ENCODE measurements at regions of chr7 and their contacts with region 1.

Region 1: GRCh38 chr7:92447345-92448204 is at the start of gene GATAD1:
- DNase-seq: peak; percentile 95
- H3K4me3 Mint-ChIP-seq: peak within 1 kb of the TSS; percentile 94
- H3K27ac Mint-ChIP-seq: peak within 1 kb of the TSS; percentile 93
- H3K4me1 Mint-ChIP-seq: peaks cover 9% of the 10 kb centered on the region
- H3K27me3 Mint-ChIP-seq: peaks cover 2% of the 10 kb centered on the region
- total RNA-seq, gene GATAD1: 21.4 and 22.1 TPM in 2 replicates

Region 2: GRCh38 chr7:91089382-91089963 is 1358.1 kb before region 1 on chr7:
- intact Hi-C with region 1: loop called (anchors 10 kb)
- DNase-seq: peak; percentile 71
- H3K4me3 Mint-ChIP-seq: no peak overlapping the region
- H3K27ac Mint-ChIP-seq: no peak overlapping the region
- H3K4me1 Mint-ChIP-seq: peaks cover 12% of the 10 kb centered on the region
- H3K27me3 Mint-ChIP-seq: peaks cover 7% of the 10 kb centered on the region

Region 3: DNA sequence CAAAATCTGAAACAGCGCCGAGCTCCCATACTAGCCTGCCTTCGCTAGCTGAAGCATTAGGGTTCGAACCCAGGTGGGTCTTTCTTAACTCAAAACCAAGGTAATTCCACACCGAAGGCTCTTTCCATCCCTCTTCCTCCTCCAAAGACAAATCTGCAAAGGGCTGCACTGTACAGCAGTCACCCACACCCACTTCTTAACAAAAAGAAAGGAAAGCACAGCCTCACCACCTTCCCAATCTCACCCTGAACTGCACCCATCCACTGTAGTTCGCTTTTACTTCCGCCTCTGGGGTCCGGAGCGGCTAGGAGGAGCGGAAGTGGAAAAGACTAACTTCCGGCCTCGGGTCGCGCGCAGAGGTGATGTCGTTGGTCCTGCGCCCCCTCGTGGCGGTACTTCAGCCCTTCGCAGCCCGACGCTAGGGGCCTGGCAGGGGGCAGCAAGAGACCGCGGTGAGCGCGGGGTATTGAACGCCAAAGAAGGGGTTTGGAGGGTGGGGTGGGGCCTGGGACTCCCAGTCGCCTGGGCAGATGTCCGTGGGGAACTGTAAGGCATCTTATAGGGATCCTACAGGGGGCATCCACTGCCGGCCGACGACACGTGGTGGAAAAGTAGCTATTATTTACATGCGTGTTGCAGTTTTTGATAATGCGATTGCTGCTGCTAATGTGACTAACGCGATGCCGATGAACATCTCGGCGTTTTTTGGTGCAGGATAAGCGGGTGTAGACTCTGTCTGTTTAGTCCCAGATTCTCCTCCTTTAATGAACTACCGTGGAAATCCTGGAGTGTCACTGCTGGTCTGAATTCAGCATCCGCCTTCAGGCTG is 566.9 kb before region 1 on chr7 and contains the start of gene MTERF1:
- intact Hi-C with region 1: loop called (anchors 2 kb)
- DNase-seq: peak; percentile 97
- H3K4me3 Mint-ChIP-seq: peak within 1 kb of the TSS; percentile 90
- H3K27ac Mint-ChIP-seq: peak within 1 kb of the TSS; percentile 90
- H3K4me1 Mint-ChIP-seq: peaks cover 27% of the 10 kb centered on the region
- H3K27me3 Mint-ChIP-seq: no peaks in the 10 kb centered on the region
- total RNA-seq, gene MTERF1: 19.5 and 20.9 TPM in 2 replicates

Region 4: DNA sequence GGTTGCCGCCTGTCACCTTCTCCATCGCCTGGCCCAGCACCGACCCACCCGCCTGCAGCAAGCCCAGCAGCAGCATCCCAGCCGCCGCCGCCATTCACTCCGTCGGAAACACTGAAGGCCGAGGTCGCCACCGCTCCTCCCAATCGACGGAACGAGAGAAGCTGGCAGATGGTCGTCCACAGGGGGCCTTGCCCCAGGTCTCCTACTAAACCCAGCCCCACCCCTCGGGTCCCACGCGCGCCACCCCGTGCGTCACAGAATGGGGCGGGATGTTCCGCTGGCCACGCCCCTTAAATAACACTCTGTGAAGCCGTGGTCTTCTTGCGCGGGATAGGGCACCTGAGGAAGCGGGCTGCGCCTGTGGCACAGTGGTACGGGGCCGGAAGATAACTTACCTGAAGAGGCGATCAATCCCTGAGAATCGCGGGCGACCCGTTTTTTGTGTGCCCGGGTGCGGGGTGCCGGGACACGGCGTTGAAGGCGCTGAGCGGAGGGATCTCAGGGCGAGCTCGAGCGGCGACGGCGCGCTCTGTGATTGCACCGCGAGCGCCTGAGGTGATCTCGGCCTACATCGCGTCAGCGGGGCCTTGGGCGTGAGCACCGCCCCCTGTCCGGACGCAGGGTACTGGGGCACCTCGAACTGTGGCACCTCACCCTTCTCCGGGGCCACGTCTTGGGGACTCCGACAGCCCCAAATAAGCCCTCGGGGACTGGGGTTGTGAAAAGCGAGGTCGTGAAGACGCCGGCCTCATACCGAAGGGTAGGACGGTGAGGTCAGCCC is 313.1 kb before region 1 on chr7 and contains the start of gene CYP51A1:
- intact Hi-C with region 1: loop called (anchors 1 kb)
- DNase-seq: peak; percentile 99
- H3K4me3 Mint-ChIP-seq: peak within 1 kb of the TSS; percentile 95
- H3K27ac Mint-ChIP-seq: peak within 1 kb of the TSS; percentile 100
- H3K4me1 Mint-ChIP-seq: peaks cover 40% of the 10 kb centered on the region
- H3K27me3 Mint-ChIP-seq: no peaks in the 10 kb centered on the region
- total RNA-seq, gene CYP51A1: 103 and 106 TPM in 2 replicates

Region 5: GRCh38 chr7:92421676-92422435 is 25.7 kb before region 1 on chr7:
- intact Hi-C with region 1: loop called (anchors 1 kb)
- DNase-seq: no peak
- H3K4me3 Mint-ChIP-seq: no peak overlapping the region
- H3K27ac Mint-ChIP-seq: no peak overlapping the region
- H3K4me1 Mint-ChIP-seq: peaks cover 14% of the 10 kb centered on the region
- H3K27me3 Mint-ChIP-seq: peaks cover 3% of the 10 kb centered on the region

Region 6: GRCh38 chr7:93231799-93232672 is 784.5 kb after region 1 on chr7 and contains the start of gene VPS50:
- intact Hi-C with region 1: loop called (anchors 5 kb)
- DNase-seq: peak; percentile 98
- H3K4me3 Mint-ChIP-seq: peak within 1 kb of the TSS; percentile 99
- H3K27ac Mint-ChIP-seq: peak within 1 kb of the TSS; percentile 93
- H3K4me1 Mint-ChIP-seq: peaks cover 13% of the 10 kb centered on the region
- H3K27me3 Mint-ChIP-seq: peaks cover 4% of the 10 kb centered on the region
- total RNA-seq, gene VPS50: 14.7 and 17.1 TPM in 2 replicates